AG04450 (cell line): ENCODE measurements at regions of chr1 and their contacts with region 1.

Region 1: GRCh38 chr1:116737020-116737854 is 17.0 kb upstream of the CD2 start:
- DNase-seq: peak; percentile 3
- H3K4me3 ChIP-seq: no peak overlapping the region
- H3K27ac ChIP-seq: no peak overlapping the region
- H3K27me3 ChIP-seq: no peaks in the 10 kb centered on the region
- CTCF ChIP-seq: peak; percentile 76

Region 2: GRCh38 chr1:116605315-116605714 is 131.9 kb before region 1 on chr1:
- CTCF ChIA-PET with region 1: no interaction called
- POLR2A ChIA-PET with region 1: no interaction called
- DNase-seq: no peak
- H3K4me3 ChIP-seq: no peak overlapping the region
- H3K27ac ChIP-seq: no peak overlapping the region
- H3K27me3 ChIP-seq: no peaks in the 10 kb centered on the region
- CTCF ChIP-seq: no peak

Region 3: DNA sequence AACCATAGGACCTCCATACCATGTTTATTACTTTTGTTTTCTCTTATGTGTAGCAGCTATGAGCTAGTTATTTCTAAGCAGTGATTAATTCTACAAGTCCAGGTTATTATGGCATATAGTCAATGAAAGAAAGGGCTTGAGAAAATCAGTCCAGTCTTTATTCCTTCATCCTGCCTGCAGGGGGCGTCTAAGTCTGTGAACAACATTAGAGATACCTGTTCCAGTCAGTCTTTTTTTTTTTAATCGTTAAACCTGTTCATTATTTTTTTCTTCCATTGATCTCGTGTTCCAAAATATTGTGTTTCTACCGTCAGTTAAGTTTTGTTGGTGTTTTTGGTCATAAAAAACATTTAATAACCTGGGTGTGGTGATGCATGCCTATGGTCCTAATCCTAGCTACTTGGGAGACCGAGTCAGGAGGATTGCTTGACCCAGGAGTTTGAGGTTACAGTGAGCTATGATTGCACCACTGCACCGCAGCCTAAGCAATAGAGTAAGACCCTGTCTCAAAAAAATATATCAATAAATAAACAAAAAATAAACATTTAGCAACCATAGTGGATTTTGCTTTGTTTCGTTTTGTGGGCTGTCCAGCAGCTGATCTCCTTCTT is 12.4 kb before region 1 on chr1:
- CTCF ChIA-PET with region 1: interaction called, 22 read pairs
- POLR2A ChIA-PET with region 1: no interaction called
- DNase-seq: peak; percentile 16
- H3K4me3 ChIP-seq: no peak overlapping the region
- H3K27ac ChIP-seq: no peak overlapping the region
- H3K27me3 ChIP-seq: no peaks in the 10 kb centered on the region
- CTCF ChIP-seq: peak; percentile 73

Region 4: DNA sequence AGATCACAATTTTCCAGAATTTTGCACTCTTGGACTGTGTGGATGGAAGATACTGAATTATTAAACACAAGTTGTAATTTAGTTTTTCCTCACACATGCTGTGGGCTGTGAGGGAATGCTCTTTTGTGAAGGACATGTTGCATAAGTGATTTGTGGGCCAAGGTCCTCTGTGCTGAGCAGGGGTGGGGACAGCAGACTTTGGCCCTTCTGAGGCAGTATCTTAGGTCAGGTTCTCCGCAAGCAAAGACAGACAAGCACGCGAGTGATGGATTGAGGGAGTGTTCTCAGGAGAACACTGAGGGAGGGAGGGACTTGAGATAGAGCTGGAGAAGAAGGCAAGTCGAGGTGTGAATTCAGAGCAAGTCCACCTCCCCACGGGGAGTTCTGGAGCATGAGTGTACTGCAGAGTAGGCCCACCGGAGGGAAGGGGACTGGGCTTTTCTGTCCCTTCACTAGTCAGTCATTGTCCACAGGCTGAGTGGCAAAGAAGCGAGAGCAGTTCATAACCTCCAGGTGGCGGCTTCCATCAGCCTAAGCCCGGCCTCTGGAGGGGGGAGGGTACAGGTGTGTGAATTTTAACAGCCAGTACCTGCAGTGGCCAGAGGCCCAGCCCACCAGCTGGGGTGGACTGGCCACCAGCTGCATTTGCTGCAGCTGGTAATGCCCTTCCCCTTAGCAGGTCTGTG is 245.2 kb after region 1 on chr1:
- CTCF ChIA-PET with region 1: no interaction called
- POLR2A ChIA-PET with region 1: no interaction called
- DNase-seq: no peak
- H3K4me3 ChIP-seq: no peak overlapping the region
- H3K27ac ChIP-seq: no peak overlapping the region
- H3K27me3 ChIP-seq: peaks cover 6% of the 10 kb centered on the region
- CTCF ChIP-seq: no peak